Activated T-helper 1 cell treated with anti-CD3 and anti-CD28 coated beads, Interleukin-12 subunit alpha, Interleukin-12 subunit beta, Interleukin-2, Interleukin-4 antibody, amounts not matched to agents 30 ng/mL and 10 ng/mL and 1 ng/mL, durations not matched to agents 14 hours and 24 hours and 36 hours (primary cell): ENCODE measurements at regions of chr7 and their contacts with region 1.

Region 1: GRCh38 chr7:87312215-87312865 is 33.1 kb upstream of the CROT start:
- DNase-seq: peak; percentile 44
- H3K4me3 Mint-ChIP-seq: no peak overlapping the region
- H3K27ac Mint-ChIP-seq: no peak overlapping the region
- H3K4me1 Mint-ChIP-seq: no peaks in the 10 kb centered on the region
- H3K27me3 Mint-ChIP-seq: peaks cover 7% of the 10 kb centered on the region

Region 2: DNA sequence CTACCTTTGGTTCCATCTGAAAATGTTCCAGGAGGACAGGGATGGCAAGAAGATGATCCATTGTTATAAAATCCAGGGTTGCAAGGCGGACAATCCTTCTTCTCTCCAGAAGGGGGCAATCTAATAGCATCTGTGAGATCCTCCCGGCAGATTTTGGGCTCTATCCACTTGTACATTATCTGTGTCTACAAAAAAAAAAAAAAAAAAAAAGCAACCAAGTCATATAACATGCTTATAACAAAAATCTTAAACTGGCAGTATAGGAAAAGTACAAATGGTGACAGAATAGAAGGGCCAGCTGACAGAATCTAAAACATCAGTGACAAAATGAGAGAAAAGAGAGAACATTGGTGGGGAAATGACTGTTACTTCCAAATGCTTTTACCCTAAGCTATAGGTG is 385.6 kb before region 1 on chr7:
- intact Hi-C with region 1: loop called (anchors 2 kb)
- DNase-seq: no peak
- H3K4me3 Mint-ChIP-seq: no peak overlapping the region
- H3K27ac Mint-ChIP-seq: no peak overlapping the region
- H3K4me1 Mint-ChIP-seq: no peaks in the 10 kb centered on the region
- H3K27me3 Mint-ChIP-seq: peaks cover 6% of the 10 kb centered on the region

Region 3: DNA sequence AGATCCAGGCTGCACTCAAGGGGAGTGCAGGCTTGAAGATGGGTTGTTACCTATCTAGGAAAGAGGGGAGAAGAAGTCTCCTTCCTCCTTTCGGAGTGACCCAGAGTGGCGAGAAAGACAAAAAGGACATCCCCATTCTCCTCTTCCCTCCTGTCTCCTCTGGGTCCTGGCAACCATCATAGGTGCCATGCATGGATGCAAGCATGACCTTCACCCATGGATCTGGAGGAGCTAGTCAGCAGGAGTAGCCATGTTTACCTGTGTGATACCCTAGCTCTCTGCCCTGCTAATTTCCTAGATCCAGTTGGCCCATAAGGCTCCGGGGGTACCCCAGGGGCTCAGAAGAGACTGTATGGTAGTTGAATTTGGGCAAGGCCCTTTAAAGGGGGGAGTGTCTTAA is 15.9 kb after region 1 on chr7:
- intact Hi-C with region 1: no loop called
- DNase-seq: no peak
- H3K4me3 Mint-ChIP-seq: no peak overlapping the region
- H3K27ac Mint-ChIP-seq: no peak overlapping the region
- H3K4me1 Mint-ChIP-seq: peaks cover 4% of the 10 kb centered on the region
- H3K27me3 Mint-ChIP-seq: no peaks in the 10 kb centered on the region

Region 4: DNA sequence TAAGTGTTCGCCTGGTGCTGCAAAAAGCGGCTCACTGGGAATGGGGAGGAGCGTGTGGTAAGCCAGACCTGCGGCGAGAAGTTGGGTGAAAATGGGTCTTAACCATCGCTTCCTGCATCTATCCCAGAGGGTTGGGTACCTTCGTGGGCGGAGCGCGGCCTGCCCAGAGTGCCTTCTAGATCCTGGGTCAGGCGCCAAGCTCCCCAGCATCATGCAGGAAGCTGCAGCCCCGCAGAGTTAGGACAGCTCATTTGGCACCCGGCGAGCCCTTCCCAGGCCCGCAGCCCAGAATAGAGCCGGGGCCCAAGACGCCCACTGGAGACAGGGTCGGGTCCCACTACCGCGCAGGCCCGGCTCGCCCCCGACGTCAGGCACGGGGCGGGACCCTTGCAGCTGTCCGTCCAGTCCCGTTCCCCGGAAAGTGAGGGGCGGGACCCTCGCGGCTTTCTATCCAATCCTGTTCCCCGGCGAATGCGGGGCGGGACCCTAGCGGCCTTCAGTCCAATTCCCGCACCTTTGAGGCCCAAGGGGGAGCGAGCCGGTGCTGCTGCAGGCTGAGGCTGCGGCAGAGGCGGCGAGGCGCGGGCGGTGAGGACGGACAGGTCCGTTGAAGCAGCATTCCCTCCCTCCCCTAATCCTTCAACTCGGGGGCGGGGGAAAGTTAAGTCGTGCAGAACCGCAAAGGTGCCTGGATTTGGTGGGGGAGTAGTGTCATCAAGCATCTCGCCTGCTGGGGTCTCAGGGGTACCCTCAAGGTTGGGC is 33.0 kb after region 1 on chr7 and contains the start of gene CROT:
- intact Hi-C with region 1: loop called (anchors 2 kb)
- DNase-seq: peak; percentile 93
- H3K4me3 Mint-ChIP-seq: peak within 1 kb of the TSS; percentile 92
- H3K27ac Mint-ChIP-seq: peak within 1 kb of the TSS; percentile 89
- H3K4me1 Mint-ChIP-seq: peaks cover 57% of the 10 kb centered on the region
- H3K27me3 Mint-ChIP-seq: peaks cover 1% of the 10 kb centered on the region
- total RNA-seq, gene CROT: 5.9 and 6.5 TPM in 2 replicates

Region 5: DNA sequence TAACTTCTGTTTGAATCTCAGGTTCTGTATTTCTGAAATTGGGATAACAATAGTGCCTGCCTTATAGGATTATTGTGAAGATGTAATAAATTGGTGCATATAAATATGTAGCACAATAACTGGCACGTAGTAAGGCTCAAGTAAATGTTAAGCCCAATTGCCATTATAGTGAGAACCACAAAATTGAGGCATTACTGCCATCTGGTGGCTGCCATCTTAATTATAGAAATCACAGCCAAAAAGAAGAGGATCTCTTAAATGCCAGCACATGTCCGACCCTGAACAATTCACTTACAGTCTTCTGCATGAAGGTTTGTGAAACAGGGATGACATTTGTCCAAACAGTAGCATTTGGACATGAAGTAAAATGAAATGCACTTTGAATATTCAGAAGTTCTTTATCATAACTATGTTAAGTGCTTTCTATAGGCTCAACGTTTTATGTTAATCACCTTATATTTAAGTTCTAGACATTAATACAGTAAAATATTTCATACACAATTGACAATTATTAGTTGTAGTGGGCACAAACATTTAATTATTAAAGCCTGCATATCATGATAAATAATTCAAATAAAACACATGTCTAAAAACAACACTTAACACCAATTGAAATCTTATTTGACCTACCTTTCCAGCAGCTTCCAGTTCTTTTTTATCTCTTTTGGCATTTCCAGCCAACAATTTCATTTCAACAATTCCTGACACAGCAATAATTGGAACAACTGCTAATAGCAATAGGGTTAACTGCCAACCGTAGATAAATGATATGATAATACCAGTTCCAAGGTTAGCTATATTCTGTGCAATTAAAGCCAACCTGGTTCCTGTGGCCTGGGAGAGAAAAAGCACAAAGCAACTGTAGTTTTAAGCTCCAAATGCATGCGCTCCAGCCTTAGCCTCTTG is 104.6 kb after region 1 on chr7:
- intact Hi-C with region 1: loop called (anchors 1 kb)
- DNase-seq: peak; percentile 50
- H3K4me3 Mint-ChIP-seq: no peak overlapping the region
- H3K27ac Mint-ChIP-seq: no peak overlapping the region
- H3K4me1 Mint-ChIP-seq: no peaks in the 10 kb centered on the region
- H3K27me3 Mint-ChIP-seq: peaks cover 13% of the 10 kb centered on the region